Activated naive CD4-positive, alpha-beta T cell treated with anti-CD3 and anti-CD28 coated beads for 36 hours (primary cell): ENCODE measurements at regions of chr1 and their contacts with region 1.

Region 1: GRCh38 chr1:101259744-101260148 is 22.9 kb downstream of the S1PR1 start:
- DNase-seq: no peak
- H3K4me3 Mint-ChIP-seq: no peak overlapping the region
- H3K27ac Mint-ChIP-seq: peak overlapping the region; percentile 77
- H3K4me1 Mint-ChIP-seq: peaks cover 67% of the 10 kb centered on the region
- H3K27me3 Mint-ChIP-seq: no peaks in the 10 kb centered on the region

Region 2: DNA sequence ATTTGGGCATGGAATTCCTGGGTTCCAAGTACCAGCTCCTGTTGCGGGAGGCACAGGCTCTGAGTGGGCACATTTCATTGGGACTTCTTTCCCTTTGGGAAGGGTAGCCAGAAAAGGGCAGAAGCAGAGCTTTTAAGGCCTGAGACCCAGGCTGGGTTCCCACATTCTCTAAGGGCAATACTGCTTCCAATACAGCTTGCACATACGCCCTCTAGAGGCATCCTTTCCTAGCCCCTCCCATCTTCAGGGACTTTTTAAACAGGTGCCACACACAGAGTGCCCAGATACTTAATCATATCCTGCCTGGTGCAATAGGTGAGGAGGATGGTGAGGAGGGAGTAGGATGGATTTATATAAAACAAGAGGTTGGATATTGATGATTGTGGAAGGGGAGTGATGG is 716.1 kb before region 1 on chr1:
- CTCF ChIA-PET with region 1: no interaction called
- intact Hi-C with region 1: no loop called
- DNase-seq: peak; percentile 75
- H3K4me3 Mint-ChIP-seq: no peak overlapping the region
- H3K27ac Mint-ChIP-seq: no peak overlapping the region
- H3K4me1 Mint-ChIP-seq: peaks cover 2% of the 10 kb centered on the region
- H3K27me3 Mint-ChIP-seq: peaks cover 23% of the 10 kb centered on the region

Region 3: DNA sequence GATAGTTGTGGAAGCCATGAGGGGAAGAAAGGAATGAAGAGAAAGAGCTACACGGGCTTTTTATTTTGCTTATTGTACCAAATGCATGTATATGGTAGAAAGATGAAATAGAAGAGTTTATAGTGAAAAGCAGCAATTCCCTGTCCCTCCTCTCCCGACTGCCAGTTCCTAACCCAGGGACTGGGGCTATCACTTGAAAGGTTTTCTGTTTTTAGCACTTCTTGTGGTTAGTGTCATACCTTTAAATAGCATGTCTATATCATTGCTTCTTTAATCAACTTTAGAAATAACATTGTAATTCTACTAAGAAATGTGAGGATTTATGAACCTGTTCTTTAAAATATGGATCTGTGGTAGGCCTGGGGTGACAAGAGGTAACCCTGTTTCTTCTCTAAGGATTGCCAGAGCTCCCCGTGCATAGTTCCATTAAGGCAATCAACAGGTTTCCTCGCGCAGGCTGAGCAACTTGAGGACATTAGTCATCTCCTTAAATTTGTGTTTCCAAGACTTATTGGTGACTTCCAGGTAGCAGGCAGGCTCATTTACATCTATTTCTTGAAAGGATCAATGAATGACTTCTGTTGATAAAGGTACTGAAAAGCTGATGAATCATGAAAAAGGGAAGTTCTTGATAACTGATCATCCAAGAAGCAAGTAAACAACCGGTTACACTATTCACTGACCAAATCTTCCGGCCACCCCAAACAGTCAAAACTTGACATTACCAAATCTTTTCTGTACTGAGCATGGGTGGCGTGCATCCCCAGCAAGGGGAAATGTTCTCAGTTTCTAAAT is 60.7 kb before region 1 on chr1:
- CTCF ChIA-PET with region 1: no interaction called
- intact Hi-C with region 1: loop called (anchors 1 kb)
- DNase-seq: peak; percentile 82
- H3K4me3 Mint-ChIP-seq: no peak overlapping the region
- H3K27ac Mint-ChIP-seq: peak overlapping the region; percentile 79
- H3K4me1 Mint-ChIP-seq: peaks cover 28% of the 10 kb centered on the region
- H3K27me3 Mint-ChIP-seq: no peaks in the 10 kb centered on the region

Region 4: GRCh38 chr1:101278845-101279244 is 19.1 kb after region 1 on chr1:
- CTCF ChIA-PET with region 1: interaction called, 3 read pairs
- intact Hi-C with region 1: loop called (anchors 1 kb)
- DNase-seq: no peak
- H3K4me3 Mint-ChIP-seq: no peak overlapping the region
- H3K27ac Mint-ChIP-seq: no peak overlapping the region
- H3K4me1 Mint-ChIP-seq: peaks cover 71% of the 10 kb centered on the region
- H3K27me3 Mint-ChIP-seq: no peaks in the 10 kb centered on the region

Region 5: GRCh38 chr1:101592845-101593244 is 333.1 kb after region 1 on chr1:
- CTCF ChIA-PET with region 1: no interaction called
- intact Hi-C with region 1: no loop called
- DNase-seq: no peak
- H3K4me3 Mint-ChIP-seq: no peak overlapping the region
- H3K27ac Mint-ChIP-seq: no peak overlapping the region
- H3K4me1 Mint-ChIP-seq: no peaks in the 10 kb centered on the region
- H3K27me3 Mint-ChIP-seq: peaks cover 4% of the 10 kb centered on the region